Right cardiac atrium (tissue), 5 donors: ENCODE measurements at regions of chr7 and their contacts with region 1.

Region 1: DNA sequence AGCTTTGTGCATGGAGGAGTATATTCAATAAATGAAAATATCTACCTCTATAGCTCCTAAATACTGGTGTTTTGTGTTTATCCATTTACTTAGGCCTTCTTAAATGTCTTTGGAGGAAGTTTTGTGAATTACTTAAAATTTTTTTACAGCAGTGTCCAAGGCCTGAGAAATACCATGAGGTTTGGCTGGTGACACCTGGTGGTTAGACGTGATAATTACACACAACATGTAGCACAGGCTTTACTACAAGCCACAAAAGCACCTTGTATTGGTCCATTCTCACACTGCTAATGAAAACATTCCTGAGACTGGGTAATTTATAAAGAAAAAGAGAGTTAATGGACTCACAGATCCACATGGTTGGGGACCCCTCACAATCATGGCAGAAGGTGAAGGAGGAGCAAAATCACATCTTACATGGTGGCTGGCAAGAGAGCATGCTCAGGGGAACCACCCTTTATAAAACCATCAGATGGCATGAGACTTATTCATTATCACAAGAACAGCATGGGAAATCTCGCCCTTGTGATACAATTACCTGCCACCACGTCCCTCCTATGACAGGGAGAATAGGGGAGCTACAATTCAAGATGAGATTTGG is 20.6 kb downstream of the HYAL4 start:
- DNase-seq: no peak
- ATAC-seq: peak; percentile 71 to 81
- H3K4me3 ChIP-seq: no peak overlapping the region
- H3K27ac ChIP-seq: no peak overlapping the region
- H3K4me1 ChIP-seq: no peaks in the 10 kb centered on the region
- H3K27me3 ChIP-seq: no peaks in the 10 kb centered on the region

Region 2: GRCh38 chr7:123580406-123581161 is 285.0 kb before region 1 on chr7:
- intact Hi-C with region 1: loop called in 2 of 4 experiments (anchors 10 kb)
- DNase-seq: no peak
- ATAC-seq: peak; percentile 56 to 76
- H3K4me3 ChIP-seq: no peak overlapping the region
- H3K27ac ChIP-seq: no peak overlapping the region
- H3K4me1 ChIP-seq: no peaks in the 10 kb centered on the region
- H3K27me3 ChIP-seq: no peaks in the 10 kb centered on the region

Region 3: DNA sequence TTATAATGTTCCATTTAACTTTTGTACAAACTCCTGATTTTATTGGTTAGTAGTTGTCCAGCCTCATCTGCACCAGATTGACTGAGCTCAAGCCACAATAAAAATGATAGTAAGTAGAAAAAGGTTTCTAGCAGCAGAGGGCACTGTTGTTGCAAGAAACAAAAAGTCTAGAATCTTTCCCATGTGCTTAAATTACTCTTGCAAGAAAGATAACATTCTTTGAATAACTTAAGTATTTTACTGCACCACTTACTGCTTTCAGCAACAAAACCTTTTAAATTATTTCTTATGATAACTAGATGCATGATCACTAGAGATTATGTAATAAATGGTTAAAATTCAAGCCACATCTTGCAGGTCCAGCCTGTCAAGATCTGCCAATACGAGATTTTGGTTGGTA is 182.9 kb before region 1 on chr7:
- intact Hi-C with region 1: loop called in 3 of 4 experiments (anchors 5 to 10 kb)
- DNase-seq: no peak
- ATAC-seq: peak; percentile 39 to 43
- H3K4me3 ChIP-seq: no peak overlapping the region
- H3K27ac ChIP-seq: no peak overlapping the region
- H3K4me1 ChIP-seq: peaks cover 2% of the 10 kb centered on the region
- H3K27me3 ChIP-seq: no peaks in the 10 kb centered on the region

Region 4: DNA sequence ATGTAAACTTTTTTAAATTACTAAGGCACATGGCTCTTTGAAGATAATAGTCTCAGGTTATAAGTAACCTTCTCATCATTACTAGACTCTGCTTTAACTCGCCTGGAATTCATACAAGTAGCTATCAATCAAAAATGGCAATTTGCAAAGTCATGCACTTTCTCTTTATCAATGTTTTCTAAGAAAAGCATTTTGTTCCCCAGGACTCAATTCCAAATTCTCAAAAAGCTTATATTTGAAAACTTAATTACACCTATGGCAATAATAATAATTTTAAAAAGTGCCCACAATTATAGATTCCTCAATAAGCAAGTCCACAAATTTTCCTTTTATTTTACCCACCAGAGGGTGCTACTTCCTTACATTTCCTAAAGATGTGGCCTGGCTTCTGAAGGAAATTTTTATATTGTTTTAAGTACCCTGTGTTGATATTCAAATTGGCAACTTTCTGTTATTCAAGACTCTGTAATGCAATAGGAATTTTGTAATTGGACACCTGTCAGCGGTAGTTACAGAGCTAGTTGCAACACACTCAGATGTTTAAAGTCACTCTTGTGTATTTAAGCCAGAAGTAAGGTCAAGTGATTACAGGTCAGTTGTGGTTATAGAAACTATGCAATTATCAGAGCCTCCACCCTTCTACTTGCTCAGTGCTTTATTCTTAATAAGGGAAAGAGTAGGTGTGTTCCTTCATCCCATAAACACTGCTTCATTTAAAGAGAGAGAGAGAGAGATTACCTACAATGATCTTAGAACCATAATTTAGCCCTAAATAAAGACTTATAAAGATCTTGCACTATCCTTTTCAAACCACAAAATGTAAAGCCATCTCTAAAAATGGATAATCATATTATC is 67.7 kb before region 1 on chr7:
- intact Hi-C with region 1: loop called in 3 of 4 experiments (anchors 2 to 10 kb)
- DNase-seq: no peak
- ATAC-seq: peak; percentile 42 to 77
- H3K4me3 ChIP-seq: no peak overlapping the region
- H3K27ac ChIP-seq: no peak overlapping the region
- H3K4me1 ChIP-seq: no peaks in the 10 kb centered on the region
- H3K27me3 ChIP-seq: no peaks in the 10 kb centered on the region

Region 5: GRCh38 chr7:123805287-123805686 is 60.3 kb before region 1 on chr7:
- intact Hi-C with region 1: loop called in 1 of 4 experiments (anchors 10 kb)
- DNase-seq: no peak
- ATAC-seq: no peak
- H3K4me3 ChIP-seq: no peak overlapping the region
- H3K27ac ChIP-seq: no peak overlapping the region
- H3K4me1 ChIP-seq: no peaks in the 10 kb centered on the region
- H3K27me3 ChIP-seq: no peaks in the 10 kb centered on the region